Posterior cingulate gyrus (tissue), 11 donors: ENCODE measurements at regions of chr18 and their contacts with region 1.

Region 1: GRCh38 chr18:10401521-10401920 is 52.9 kb upstream of the APCDD1 start:
- DNase-seq: no peak

Region 2: DNA sequence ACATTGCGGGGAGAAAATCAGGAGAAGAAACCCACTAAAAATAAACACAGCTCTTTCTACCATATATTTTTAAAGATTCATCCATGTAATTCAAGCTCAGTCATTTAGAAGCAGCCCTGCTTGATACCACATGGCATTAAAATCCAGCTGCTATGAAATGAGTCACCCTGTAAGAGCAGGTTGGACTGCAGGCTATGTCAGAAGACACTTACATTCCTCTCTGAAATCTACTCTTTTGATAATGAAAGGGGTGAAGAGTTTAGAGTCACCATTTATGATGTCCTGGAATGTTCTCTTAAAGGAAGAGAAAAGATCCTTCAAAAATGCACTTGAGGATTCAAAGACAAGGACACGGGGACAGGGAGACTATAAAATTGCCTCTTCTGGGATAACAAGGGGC is 47.7 kb before region 1 on chr18:
- intact Hi-C with region 1: loop called (anchors 5 kb)
- DNase-seq: no peak

Region 3: GRCh38 chr18:10442551-10442971 is 41.0 kb after region 1 on chr18:
- intact Hi-C with region 1: no loop called
- DNase-seq: peak in 6 of 10 donors; percentile 17 to 91 (median 44)

Region 4: GRCh38 chr18:10453806-10454673 is 52.5 kb after region 1 on chr18 and contains the start of gene APCDD1:
- intact Hi-C with region 1: loop called (anchors 5 kb)
- DNase-seq: peak in 9 of 10 donors; percentile 55 to 96 (median 69)

Region 5: DNA sequence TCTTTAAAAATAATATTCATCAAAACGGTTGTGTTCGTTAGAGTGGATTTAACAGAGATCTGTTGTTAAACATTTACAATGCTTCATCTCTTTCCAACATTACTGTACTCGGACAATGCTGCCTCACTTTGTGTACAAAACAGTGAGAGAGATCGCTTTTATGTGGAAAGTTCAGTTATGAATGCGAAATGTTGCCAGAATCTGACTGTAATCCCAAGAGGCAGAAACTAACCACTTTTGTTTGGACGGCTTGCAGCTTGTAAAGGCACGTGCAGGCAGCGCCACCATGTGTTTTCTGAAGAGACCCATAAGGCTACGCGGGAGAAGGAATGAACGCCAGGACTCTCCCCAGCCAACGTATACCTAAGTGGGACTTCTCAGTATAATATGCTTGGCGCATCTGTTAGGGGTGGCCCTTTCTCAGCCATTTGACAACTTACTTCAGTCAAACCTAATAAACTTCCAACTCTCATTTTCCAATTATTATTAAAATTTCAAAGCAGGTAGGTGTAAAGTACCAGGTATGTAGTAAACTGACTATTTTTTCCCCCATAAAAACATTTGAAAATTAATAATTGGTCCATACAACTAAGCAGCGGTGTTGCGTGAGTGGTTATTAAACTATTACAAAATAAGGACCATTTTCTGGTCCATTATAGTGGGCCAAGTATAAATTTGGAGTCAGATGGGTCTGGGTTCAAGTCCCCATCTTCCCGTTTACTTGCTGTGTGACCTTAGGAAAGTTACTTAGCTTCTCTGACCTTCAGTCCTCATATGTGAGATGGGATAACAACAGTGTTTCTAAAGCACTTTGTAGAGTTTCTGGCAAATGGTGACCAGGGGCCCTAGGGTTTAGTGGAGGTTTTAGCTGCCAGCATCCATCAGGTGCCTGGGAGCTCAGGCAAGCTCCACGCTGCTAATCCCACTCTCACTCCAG is 118.7 kb after region 1 on chr18:
- intact Hi-C with region 1: loop called (anchors 2 kb)
- DNase-seq: peak; percentile 62 to 97 (median 83)